ENCODE measurements at regions of chr20 and their contacts with region 1.

Region 1: DNA sequence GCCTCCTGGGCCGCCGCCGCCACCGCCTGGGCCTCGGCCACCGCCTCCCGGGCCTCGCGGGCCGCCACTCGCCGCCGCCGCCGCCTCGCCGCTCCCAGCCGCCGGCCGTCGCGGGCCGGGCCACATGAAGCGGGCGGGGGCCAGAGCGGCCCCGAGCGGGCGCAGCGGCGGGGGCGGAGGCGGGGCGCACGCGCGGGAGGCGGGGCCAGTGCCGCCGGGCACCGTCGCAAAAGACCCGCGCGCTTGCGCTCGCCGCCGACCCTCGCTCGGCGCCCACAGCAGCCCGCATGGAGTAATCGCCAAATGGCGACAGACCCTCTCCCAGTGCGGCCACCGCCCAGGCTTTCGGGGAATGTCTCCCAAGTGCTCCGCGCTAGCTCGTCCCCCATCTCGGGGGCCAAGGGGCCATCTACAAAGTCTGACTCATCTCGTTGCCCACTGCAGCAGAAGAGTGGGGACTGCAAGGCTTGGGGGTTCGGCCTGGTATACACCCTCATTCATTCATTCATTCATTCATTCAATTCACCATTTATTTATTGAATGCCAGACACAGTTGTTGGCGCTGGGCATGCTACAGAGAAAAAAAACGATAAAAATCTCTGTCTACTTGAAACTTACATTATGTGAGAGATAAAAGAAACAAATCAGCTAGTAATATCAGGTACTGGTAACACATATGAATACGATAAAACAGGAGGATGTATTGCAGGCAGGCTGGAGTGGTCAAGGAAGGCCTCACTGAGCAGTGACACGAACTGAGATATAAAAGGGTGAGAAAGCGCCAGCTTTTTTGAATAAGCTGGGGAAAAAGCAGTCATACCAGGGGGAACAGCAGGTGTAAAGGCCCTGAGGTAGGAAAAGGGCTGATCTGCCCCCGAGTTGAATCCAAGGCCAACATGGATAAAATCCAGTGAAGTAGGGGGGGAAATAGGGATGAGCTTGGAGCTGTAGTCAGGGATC is at the start of gene B4GALT5:
- DNase-seq: peak; percentile 82
- ATAC-seq: peak; percentile 85 to 97
- total RNA-seq, gene B4GALT5: 24.1 to 32.6 TPM

Region 2: DNA sequence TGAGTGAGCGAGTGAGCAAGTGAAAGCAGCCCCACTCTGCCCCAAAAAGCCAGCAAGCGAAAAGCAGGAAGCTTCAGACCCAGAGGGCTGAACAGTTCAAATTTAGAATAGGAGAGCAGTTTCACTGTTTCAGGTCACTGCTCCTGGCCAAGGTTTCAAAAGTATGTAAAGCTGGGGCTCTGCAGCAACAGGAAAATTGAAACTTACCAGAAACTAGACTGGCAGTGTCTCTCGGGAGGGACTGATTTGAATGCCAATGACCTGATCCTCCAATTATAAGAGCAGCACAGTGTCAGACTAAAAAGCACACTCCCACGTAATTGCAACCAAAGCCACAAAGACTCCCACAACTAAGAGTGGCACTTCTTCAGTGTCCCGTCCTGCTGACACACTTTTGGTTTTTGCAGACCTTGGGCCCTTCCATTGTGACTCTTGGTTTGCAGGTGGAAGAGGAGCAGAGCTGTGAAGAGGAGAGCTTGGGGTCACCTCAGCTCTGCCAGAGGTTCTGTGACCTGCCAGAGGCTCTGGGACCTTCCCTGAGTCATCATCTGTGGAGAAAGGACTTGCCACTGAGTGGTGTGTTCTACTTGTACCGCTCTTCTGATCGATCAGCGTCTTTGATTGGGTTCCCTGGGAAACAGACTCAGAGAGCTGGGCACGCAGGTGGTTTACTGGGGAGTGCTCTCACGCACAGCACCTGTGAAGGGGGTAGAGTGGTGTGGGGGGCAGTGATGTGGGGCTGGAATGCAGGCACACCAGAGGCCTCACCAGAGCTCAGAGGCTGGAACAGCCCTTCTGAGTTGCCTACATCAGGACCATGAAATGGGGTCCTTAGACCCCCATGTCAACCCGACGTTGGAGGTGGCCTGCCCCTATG is 93.4 kb before region 1 on chr20:
- intact Hi-C with region 1: no loop called
- DNase-seq: no peak
- ATAC-seq: no peak

Region 3: DNA sequence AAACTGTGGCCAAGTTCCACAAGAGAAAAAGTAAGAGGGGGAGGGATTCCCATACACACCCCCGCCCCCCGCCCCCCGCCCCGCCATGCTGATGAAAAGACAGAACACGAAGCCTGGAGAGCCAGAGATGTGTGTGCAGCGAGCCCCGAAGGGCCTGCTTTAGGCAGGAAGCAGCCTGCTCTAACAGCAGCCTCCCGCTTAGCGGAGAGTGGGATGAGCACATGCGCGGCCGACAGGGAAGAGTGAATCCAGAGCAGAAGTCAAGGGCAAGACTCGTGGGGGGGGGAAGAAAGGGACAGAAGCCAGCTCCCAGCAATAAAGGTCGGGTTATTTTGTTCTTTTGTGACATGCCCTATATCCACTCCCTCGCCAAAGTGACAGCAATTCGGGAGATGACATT is 78.9 kb before region 1 on chr20:
- intact Hi-C with region 1: loop called in 1 of 2 experiments (anchors 5 kb)
- DNase-seq: no peak
- ATAC-seq: peak; percentile 21 to 48

Region 4: GRCh38 chr20:49812463-49813304 is 98.7 kb after region 1 on chr20 and contains the start of gene SLC9A8:
- intact Hi-C with region 1: loop called (anchors 10 kb)
- DNase-seq: peak; percentile 93
- ATAC-seq: peak; percentile 94 to 98
- total RNA-seq, gene SLC9A8: 6.4 to 6.5 TPM

Measured in left cardiac atrium (tissue), 4 donors.